PC-3 (cell line): ENCODE measurements at regions of chr20 and their contacts with region 1.

Region 1: GRCh38 chr20:22385602-22386305 is 198.6 kb downstream of the FOXA2 start:
- DNase-seq: peak; percentile 60
- ATAC-seq: no peak
- H3K4me3 ChIP-seq: no peak overlapping the region
- H3K27ac ChIP-seq: no peak overlapping the region
- H3K4me1 ChIP-seq: peaks cover 64% of the 10 kb centered on the region
- H3K27me3 ChIP-seq: no peaks in the 10 kb centered on the region
- CTCF ChIP-seq: peak; percentile 84

Region 2: DNA sequence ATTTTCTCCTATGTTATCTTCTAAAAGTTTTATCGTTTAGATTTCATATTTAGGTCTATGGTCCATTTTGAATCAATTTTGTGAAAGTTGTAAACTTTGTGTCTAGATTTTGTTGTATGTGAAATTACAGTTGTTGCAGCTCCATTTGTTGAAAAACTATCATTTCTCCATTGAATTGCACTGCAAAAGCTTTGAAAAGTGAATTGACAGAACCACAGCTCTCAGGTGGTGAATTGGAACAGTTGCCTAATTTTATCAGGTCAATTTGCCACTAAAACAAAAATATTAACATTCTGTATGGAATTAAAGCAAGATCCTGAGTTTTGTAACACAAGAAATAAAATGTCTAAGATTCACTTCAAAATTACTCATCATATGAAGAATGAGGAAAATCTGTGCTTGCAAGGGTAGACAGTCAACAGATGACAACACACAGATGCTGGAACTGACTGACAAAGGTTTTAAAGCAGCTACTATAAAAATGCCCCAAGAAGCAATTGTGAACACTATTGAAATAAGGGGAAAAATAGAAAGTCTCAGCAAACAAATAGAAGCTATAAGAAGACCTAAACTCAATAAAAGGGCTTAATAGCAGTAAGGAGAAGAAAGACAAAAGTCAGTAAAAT is 333.6 kb before region 1 on chr20:
- CTCF ChIA-PET with region 1: no interaction called
- POLR2A ChIA-PET with region 1: no interaction called
- intact Hi-C with region 1: no loop called
- DNase-seq: no peak
- ATAC-seq: no peak
- H3K4me3 ChIP-seq: no peak overlapping the region
- H3K27ac ChIP-seq: no peak overlapping the region
- H3K4me1 ChIP-seq: no peaks in the 10 kb centered on the region
- H3K27me3 ChIP-seq: 0 out of 2 replicates have a peak, but pooled peaks cover 3% of the 10 kb centered on the region
- CTCF ChIP-seq: no peak

Region 3: GRCh38 chr20:22346716-22347115 is 39.0 kb before region 1 on chr20:
- CTCF ChIA-PET with region 1: no interaction called
- POLR2A ChIA-PET with region 1: no interaction called
- intact Hi-C with region 1: loop called (anchors 1 kb)
- DNase-seq: peak; percentile 90
- ATAC-seq: peak; percentile 83
- H3K4me3 ChIP-seq: no peak overlapping the region
- H3K27ac ChIP-seq: no peak overlapping the region
- H3K4me1 ChIP-seq: peaks cover 27% of the 10 kb centered on the region
- H3K27me3 ChIP-seq: no peaks in the 10 kb centered on the region
- CTCF ChIP-seq: no peak

Region 4: DNA sequence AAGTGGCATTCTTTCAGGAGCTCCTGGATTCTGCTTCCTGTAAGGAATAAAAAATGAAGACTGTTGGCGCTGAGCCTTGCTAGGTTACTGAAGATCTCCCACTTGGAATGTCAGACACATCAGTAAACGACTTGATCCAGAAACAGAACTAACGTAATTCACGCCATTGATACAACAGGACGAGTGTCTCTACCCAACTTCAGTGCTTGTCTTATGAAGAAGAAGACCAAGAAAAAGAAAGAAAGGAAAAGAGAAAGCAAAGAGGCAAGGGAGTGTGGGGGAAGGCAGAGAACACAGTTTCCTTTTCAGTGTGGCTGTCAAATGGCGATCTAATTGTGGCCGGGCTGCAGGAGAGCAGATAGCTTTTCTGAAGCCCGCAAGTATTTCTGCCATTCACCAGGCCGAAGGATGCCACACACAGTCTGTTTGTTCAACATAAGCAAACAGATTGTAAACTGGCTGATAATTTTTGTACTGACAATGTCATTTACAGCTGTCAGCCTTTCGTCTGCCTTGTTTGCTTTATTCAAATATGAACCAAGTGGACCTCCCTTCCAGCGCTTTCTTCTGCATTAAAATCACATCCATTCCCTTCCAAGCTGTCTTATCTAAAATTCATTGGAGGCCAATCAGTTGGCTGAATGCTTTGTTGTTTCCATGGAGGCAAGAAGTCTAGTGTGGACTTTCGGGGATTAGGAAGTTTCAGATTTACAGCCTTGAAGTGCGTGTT is 18.0 kb after region 1 on chr20:
- CTCF ChIA-PET with region 1: interaction called, 3 read pairs
- POLR2A ChIA-PET with region 1: no interaction called
- intact Hi-C with region 1: loop called (anchors 1 kb)
- DNase-seq: peak; percentile 63
- ATAC-seq: peak; percentile 63
- H3K4me3 ChIP-seq: peak overlapping the region; percentile 68
- H3K27ac ChIP-seq: peak overlapping the region; percentile 51
- H3K4me1 ChIP-seq: peaks cover 35% of the 10 kb centered on the region
- H3K27me3 ChIP-seq: no peaks in the 10 kb centered on the region
- CTCF ChIP-seq: no peak

Region 5: DNA sequence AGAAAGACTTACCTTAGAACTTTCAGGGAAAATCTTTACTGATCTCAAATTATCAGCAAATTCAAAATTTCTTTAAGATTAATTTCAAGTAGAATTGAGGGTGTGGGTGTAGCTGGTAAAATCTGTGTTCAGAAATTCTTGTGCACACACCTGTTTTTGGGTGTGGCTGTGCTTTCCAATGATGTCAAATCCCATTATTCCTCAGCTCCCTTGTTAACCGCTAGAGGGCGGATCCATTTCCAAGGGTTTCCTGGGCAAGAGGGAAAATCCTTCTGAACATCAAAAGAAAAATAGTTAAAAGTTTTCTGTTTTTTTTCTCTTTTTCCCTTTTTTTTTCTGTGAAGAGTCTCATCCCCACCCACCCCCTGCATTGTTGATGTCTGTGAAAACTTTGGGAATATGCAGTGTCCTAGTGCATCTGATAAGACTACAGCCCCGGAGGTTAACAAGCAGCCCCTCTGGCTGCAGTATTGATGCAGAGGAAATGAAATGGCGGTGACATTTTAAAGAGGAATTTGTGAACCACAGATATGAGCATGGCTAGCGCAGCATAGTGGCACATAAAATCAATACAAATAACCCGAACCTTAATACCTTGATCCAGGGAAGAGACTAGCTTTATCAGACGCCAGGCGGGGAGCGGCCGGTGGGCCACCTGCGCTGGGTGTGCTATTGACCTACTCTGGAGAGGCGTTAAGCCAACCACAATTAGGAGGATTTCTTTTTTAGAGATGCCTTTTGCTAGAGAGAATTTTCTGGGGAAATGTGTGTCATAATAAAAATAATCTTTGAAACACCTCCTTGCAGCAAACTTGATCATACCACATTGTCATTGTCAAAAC is 67.7 kb after region 1 on chr20:
- CTCF ChIA-PET with region 1: no interaction called
- POLR2A ChIA-PET with region 1: no interaction called
- intact Hi-C with region 1: loop called (anchors 2 kb)
- DNase-seq: peak; percentile 78
- ATAC-seq: peak; percentile 39; the same call in 1 of the 2 replicates
- H3K4me3 ChIP-seq: no peak overlapping the region
- H3K27ac ChIP-seq: no peak overlapping the region
- H3K4me1 ChIP-seq: peaks cover 8% of the 10 kb centered on the region; the same call in 1 of the 2 replicates
- H3K27me3 ChIP-seq: no peaks in the 10 kb centered on the region
- CTCF ChIP-seq: peak; percentile 94

Region 6: GRCh38 chr20:22511943-22512910 is 126.5 kb after region 1 on chr20:
- CTCF ChIA-PET with region 1: no interaction called
- POLR2A ChIA-PET with region 1: interaction called, 4 read pairs
- intact Hi-C with region 1: loop called (anchors 1 kb)
- DNase-seq: peak; percentile 99
- ATAC-seq: peak; percentile 97
- H3K4me3 ChIP-seq: no peak overlapping the region; the same call in 1 of the 2 replicates
- H3K27ac ChIP-seq: peak overlapping the region; percentile 88
- H3K4me1 ChIP-seq: peaks cover 29% of the 10 kb centered on the region
- H3K27me3 ChIP-seq: no peaks in the 10 kb centered on the region
- CTCF ChIP-seq: no peak

Region 7: GRCh38 chr20:22684072-22684762 is 298.5 kb after region 1 on chr20:
- CTCF ChIA-PET with region 1: no interaction called
- POLR2A ChIA-PET with region 1: no interaction called
- intact Hi-C with region 1: loop called (anchors 2 kb)
- DNase-seq: peak; percentile 90
- ATAC-seq: peak; percentile 76
- H3K4me3 ChIP-seq: no peak overlapping the region
- H3K27ac ChIP-seq: no peak overlapping the region
- H3K4me1 ChIP-seq: peaks cover 9% of the 10 kb centered on the region; the same call in 1 of the 2 replicates
- H3K27me3 ChIP-seq: peaks cover under 1% of the 10 kb centered on the region; the same call in 1 of the 2 replicates
- CTCF ChIP-seq: peak; percentile 95

Region 8: DNA sequence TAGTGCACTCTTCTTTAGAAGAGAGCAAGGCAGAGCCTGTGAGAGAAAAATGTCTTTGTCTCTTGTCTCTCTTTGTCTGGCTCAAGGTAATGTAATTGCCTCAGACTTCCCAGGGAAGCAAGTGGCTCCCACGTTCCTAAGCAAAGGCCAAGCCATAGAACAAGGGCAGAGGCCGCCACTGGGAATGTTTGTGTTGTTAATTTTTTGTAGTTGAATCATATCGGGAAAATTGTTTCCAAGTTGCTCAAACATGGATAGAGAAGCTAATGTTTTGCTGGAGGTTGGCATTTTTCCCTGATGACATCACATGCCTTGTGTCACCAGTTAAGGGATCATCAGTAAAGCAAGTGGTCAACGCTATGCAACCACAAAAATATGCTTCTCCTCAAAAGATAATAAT is 410.1 kb after region 1 on chr20:
- CTCF ChIA-PET with region 1: no interaction called
- POLR2A ChIA-PET with region 1: no interaction called
- intact Hi-C with region 1: no loop called
- DNase-seq: peak; percentile 97
- ATAC-seq: no peak
- H3K4me3 ChIP-seq: no peak overlapping the region
- H3K27ac ChIP-seq: peak overlapping the region; percentile 57
- H3K4me1 ChIP-seq: peaks cover 49% of the 10 kb centered on the region
- H3K27me3 ChIP-seq: no peaks in the 10 kb centered on the region
- CTCF ChIP-seq: no peak